ENCODE measurements at regions of chr6 and their contacts with region 1.

Region 1: GRCh38 chr6:63683071-63683603 is 47.5 kb downstream of the PHF3 start:
- DNase-seq: no peak
- H3K4me3 ChIP-seq: no peak overlapping the region
- H3K27ac ChIP-seq: no peak overlapping the region
- H3K4me1 ChIP-seq: no peaks in the 10 kb centered on the region
- H3K27me3 ChIP-seq: no peaks in the 10 kb centered on the region
- CTCF ChIP-seq: no peak
- POLR2A ChIP-seq: no peak

Region 2: DNA sequence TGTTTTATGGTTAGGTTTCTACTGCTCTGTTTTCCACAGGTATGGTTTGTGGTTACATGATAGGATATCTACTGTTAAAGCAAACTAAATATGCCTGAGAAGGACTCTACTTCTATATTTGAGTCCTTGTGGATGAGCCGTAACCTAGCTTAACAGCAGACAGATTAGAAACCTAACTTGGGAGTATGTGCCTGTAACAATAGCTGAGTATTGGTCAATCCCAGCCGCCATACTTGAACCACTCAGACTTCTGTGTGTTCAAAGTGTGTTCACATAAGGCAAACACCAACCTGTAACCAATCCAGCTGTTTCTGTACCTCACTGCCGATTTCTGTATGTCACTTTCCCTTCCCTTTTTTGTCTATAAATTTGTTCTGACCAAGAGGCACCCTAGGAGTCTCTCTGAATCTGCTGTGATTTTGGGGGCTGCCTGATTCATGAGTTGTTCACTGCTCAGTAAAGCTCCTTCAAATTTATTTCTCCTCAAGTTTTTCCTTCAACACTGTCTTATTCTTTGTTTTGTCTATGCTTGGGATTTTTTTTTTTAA is 10.5 kb before region 1 on chr6:
- CTCF ChIA-PET with region 1: interaction called, 10 read pairs
- POLR2A ChIA-PET with region 1: no interaction called
- dilution Hi-C with region 1: no loop called
- intact Hi-C with region 1: no loop called
- DNase-seq: no peak
- H3K4me3 ChIP-seq: no peak overlapping the region
- H3K27ac ChIP-seq: no peak overlapping the region
- H3K4me1 ChIP-seq: no peaks in the 10 kb centered on the region
- H3K27me3 ChIP-seq: no peaks in the 10 kb centered on the region
- CTCF ChIP-seq: no peak
- POLR2A ChIP-seq: no peak

Measured in endothelial cell of umbilical vein (primary cell).